Spleen (tissue), 13 donors: ENCODE measurements at regions of chr3 and their contacts with region 1.

Region 1: DNA sequence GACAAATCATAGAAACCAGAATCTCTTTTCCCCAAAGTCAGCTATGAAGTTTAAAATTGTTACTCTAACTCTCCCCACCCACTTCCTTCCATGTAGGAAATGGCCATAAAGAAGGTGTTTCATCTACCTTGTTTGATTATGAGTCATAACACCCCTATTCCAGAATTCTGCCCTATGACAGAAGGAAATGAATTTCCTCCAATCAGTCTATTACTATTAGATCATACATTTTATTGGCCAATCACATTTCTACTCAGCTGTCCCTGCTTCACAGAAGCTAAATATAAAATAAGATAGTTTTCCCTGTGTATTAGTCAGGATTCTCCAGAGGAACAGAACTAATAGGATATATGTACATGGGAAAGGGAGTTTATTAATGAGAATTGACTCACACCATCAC is 102.1 kb downstream of the TGFBR2 start:
- DNase-seq: no peak
- H3K4me3 ChIP-seq: no peak overlapping the region
- H3K27ac ChIP-seq: no peak overlapping the region
- H3K4me1 ChIP-seq: peaks cover 0 to 19% (median 5%) of the 10 kb centered on the region in 6 donors
- H3K27me3 ChIP-seq: no peaks in the 10 kb centered on the region
- CTCF ChIP-seq: no peak
- POLR2A ChIP-seq: no peak

Region 2: DNA sequence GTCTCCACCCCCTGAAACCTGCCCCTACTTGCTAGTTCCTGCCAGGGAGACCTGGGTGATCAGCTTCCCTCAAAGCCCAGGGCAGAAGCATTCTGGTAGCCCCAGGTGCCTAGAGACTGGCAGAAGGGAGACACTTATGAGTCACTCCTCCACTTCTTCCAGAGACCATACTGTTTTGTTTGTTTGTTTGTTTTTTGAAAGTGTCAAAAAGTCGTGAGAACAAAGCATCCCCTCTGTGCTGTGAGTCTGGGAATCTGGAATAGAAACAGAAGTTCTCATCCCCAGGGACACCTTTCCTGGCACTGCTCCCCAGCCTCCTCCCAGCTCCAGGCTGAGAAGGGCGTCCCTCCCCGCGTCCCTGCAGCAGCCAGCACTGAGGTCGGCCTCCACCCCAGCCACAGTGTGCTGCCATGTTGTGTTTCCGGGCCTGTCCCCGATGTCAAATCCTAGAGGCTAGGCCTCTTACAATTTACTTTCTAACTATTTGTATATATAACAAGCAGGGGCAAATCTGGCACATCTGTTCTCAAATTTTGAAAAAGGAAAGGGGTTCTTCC is 854.6 kb before region 1 on chr3:
- intact Hi-C with region 1: no loop called
- DNase-seq: no peak
- H3K4me3 ChIP-seq: no peak overlapping the region
- H3K27ac ChIP-seq: no peak overlapping the region
- H3K4me1 ChIP-seq: no peaks in the 10 kb centered on the region
- H3K27me3 ChIP-seq: no peaks in the 10 kb centered on the region
- CTCF ChIP-seq: no peak
- POLR2A ChIP-seq: no peak

Region 3: DNA sequence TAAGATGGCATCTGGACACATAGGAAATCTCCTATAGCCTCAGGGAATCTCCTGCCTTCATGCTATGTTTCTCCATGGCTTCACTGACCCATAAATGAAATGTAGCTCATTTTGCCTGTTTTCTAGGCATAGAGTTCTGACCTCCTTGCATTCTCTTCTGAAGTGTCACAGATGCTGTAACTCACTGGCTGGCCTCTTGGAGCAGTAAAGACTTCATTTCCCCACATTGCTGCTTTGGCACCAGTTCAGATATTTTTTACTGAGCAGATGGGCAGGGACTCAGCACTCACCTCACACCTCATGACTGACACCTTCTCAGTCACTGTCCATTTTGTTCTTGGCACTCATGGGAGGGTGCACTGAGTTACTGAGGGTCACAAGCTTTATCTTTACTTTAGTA is 388.8 kb before region 1 on chr3:
- intact Hi-C with region 1: loop called (anchors 10 kb)
- DNase-seq: peak; percentile 27
- H3K4me3 ChIP-seq: no peak overlapping the region
- H3K27ac ChIP-seq: no peak overlapping the region
- H3K4me1 ChIP-seq: peaks cover 0 to 13% (median 6%) of the 10 kb centered on the region in 6 donors
- H3K27me3 ChIP-seq: no peaks in the 10 kb centered on the region
- CTCF ChIP-seq: peak; percentile 38 to 72 (median 58)
- POLR2A ChIP-seq: no peak

Region 4: GRCh38 chr3:30475038-30475808 is 233.2 kb before region 1 on chr3:
- intact Hi-C with region 1: no loop called
- DNase-seq: no peak
- H3K4me3 ChIP-seq: no peak overlapping the region
- H3K27ac ChIP-seq: no peak overlapping the region
- H3K4me1 ChIP-seq: peaks cover 16 to 61% (median 51%) of the 10 kb centered on the region in 6 donors
- H3K27me3 ChIP-seq: no peaks in the 10 kb centered on the region
- CTCF ChIP-seq: no peak
- POLR2A ChIP-seq: no peak